ENCODE measurements at regions of chr6 and their contacts with region 1.

Region 1: GRCh38 chr6:109783250-109783986 is 92.3 kb downstream of the FIG4 start:
- DNase-seq: peak in 1 of 2 experiments; percentile 57
- H3K4me3 ChIP-seq: no peak overlapping the region
- H3K27ac ChIP-seq: no peak overlapping the region
- H3K4me1 ChIP-seq: no peaks in the 10 kb centered on the region
- H3K27me3 ChIP-seq: no peaks in the 10 kb centered on the region
- CTCF ChIP-seq: peak in 2 of 3 experiments; percentile 75 to 79; a peak in 3 of 4 replicates
- EP300 ChIP-seq: no peak
- POLR2A ChIP-seq: no peak
- RAD21 ChIP-seq: peak; percentile 80 to 86

Region 2: DNA sequence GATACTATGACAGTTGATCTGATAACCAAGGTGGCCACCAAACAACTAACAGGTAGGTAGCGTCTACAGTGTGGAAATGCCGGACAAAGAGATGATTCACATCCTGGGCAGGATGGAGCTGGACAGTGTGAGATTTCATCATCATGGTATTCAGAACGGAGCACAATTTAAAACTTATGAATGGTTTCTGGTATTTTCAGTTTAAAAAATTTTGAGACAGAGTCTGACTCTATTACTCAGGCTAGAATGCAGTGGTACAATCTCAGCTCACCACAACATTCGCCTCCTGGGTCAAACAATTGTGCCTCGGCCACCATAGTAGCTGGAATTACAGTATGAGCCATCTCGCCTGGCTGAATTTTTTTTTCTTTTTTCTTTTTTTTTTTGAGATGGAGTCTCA is 644.3 kb before region 1 on chr6:
- CTCF ChIA-PET with region 1: no interaction called
- POLR2A ChIA-PET with region 1: no interaction called
- DNase-seq: no peak
- H3K4me3 ChIP-seq: no peak overlapping the region
- H3K27ac ChIP-seq: no peak overlapping the region
- H3K4me1 ChIP-seq: no peaks in the 10 kb centered on the region
- H3K27me3 ChIP-seq: no peaks in the 10 kb centered on the region
- CTCF ChIP-seq: no peak
- EP300 ChIP-seq: no peak
- POLR2A ChIP-seq: no peak
- RAD21 ChIP-seq: no peak

Region 3: GRCh38 chr6:109713097-109713496 is 70.3 kb before region 1 on chr6:
- CTCF ChIA-PET with region 1: interaction called, 27 read pairs
- POLR2A ChIA-PET with region 1: no interaction called
- DNase-seq: no peak
- H3K4me3 ChIP-seq: no peak overlapping the region
- H3K27ac ChIP-seq: no peak overlapping the region
- H3K4me1 ChIP-seq: no peaks in the 10 kb centered on the region
- H3K27me3 ChIP-seq: no peaks in the 10 kb centered on the region
- CTCF ChIP-seq: no peak
- EP300 ChIP-seq: no peak
- POLR2A ChIP-seq: no peak
- RAD21 ChIP-seq: no peak

Region 4: DNA sequence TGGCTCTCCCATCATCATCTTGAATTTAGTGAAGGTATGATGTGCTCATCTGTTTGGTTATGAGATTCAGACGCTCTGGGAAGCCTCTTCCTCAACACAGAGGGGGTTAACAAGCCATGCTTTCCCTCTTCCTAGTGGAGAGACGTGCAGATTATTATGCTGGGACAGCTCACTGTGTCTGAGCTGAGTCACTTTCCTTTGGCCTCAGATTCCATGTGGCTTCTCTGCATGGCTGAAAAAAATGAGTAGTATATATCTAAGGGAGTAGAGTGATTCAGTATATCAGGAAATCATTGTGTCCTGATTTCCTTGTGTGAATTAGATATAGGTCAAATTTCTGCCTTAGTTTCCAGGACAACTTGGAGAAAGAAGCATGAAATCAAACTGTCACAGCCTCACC is 39.7 kb before region 1 on chr6:
- CTCF ChIA-PET with region 1: interaction called, 11 read pairs
- POLR2A ChIA-PET with region 1: no interaction called
- DNase-seq: no peak
- H3K4me3 ChIP-seq: no peak overlapping the region
- H3K27ac ChIP-seq: no peak overlapping the region
- H3K4me1 ChIP-seq: peaks cover 0 to 2% (median 0%) of the 10 kb centered on the region in 4 experiments; a peak in 2 of 7 replicates
- H3K27me3 ChIP-seq: peaks cover 0 to 1% (median 0%) of the 10 kb centered on the region in 4 experiments; a peak in 1 of 7 replicates
- CTCF ChIP-seq: no peak
- EP300 ChIP-seq: no peak
- POLR2A ChIP-seq: no peak
- RAD21 ChIP-seq: no peak

Region 5: DNA sequence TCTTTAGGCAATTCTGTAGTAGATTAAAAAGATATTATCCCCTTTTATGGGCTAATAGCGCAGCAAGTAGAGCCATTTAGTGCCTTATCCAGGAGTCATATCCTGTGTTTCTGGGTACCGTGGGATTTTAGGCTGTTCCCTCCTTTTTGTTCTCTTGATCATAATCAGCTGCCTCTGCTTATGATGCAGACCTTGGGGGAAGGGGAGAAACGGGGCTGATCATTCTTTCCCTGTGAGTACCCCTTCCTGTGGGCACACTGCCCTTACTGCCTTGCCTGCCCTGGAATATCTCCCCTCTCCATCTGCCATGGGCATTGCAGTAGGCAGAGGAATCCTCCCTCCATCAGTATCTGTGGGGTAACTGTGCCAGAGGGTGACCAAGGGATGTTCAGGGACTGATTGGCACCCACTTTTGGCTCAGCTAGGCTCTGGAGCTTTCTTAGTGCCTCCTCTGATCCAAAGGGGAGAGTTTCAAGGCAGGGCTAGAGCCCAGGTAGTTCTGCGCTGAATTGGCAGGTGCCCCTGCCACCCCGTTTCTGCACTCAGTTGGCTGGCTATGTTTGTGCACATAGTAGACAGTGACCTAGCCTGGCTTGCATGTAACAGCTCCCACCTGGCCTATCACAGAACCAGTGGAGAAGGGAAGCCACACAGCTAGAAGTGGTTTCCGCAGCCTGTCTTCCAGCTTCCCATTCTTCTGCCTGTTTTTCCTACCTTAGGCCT is 10.9 kb after region 1 on chr6:
- CTCF ChIA-PET with region 1: interaction called, 20 read pairs
- POLR2A ChIA-PET with region 1: no interaction called
- DNase-seq: no peak
- H3K4me3 ChIP-seq: no peak overlapping the region
- H3K27ac ChIP-seq: no peak overlapping the region
- H3K4me1 ChIP-seq: peaks cover 0 to 7% (median 3%) of the 10 kb centered on the region in 4 experiments; a peak in 4 of 7 replicates
- H3K27me3 ChIP-seq: no peaks in the 10 kb centered on the region
- CTCF ChIP-seq: no peak
- EP300 ChIP-seq: no peak
- POLR2A ChIP-seq: no peak
- RAD21 ChIP-seq: no peak

Region 6: GRCh38 chr6:109816452-109817374 is 33.3 kb after region 1 on chr6:
- CTCF ChIA-PET with region 1: interaction called, 11 read pairs
- POLR2A ChIA-PET with region 1: no interaction called
- DNase-seq: no peak
- H3K4me3 ChIP-seq: no peak overlapping the region
- H3K27ac ChIP-seq: no peak overlapping the region
- H3K4me1 ChIP-seq: no peaks in the 10 kb centered on the region; a peak in 1 of 7 replicates
- H3K27me3 ChIP-seq: no peaks in the 10 kb centered on the region
- CTCF ChIP-seq: no peak
- EP300 ChIP-seq: no peak
- POLR2A ChIP-seq: no peak
- RAD21 ChIP-seq: no peak

Region 7: GRCh38 chr6:109867009-109867969 is 83.9 kb after region 1 on chr6:
- CTCF ChIA-PET with region 1: interaction called, 17 read pairs
- POLR2A ChIA-PET with region 1: no interaction called
- DNase-seq: no peak
- H3K4me3 ChIP-seq: no peak overlapping the region
- H3K27ac ChIP-seq: no peak overlapping the region
- H3K4me1 ChIP-seq: peaks cover 0 to 17% (median 10%) of the 10 kb centered on the region in 4 experiments; a peak in 5 of 7 replicates
- H3K27me3 ChIP-seq: no peaks in the 10 kb centered on the region
- CTCF ChIP-seq: no peak
- EP300 ChIP-seq: no peak
- POLR2A ChIP-seq: no peak
- RAD21 ChIP-seq: no peak